Panc1 (cell line): ENCODE measurements at regions of chr16 and their contacts with region 1.

Region 1: DNA sequence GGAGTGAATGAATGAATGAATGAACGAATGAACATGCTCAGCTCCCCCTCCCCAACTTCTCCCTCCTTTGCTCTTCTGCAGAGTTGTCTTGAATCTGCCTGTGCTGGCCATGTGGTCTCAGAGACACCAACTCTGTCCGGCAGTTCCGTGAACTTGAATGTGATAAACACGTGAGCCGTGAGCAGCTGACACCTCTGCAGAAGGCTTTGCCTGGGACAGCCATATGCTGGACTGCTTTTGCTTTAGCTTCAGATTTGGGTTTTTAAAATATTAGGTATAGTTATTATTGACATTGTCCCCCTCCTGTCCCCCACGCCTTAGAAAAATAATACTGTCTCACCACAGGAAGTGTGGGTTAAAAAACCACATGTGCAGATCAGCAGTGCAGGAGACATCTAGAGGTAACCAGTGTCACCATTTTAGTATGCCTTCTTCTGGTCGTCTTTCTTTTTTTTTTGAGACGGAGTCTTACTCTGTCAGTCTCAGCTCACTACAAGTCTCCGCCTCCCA is 83.8 kb downstream of the ABCC1 start:
- DNase-seq: no peak
- ATAC-seq: no peak
- H3K4me3 ChIP-seq: no peak overlapping the region
- H3K27ac ChIP-seq: no peak overlapping the region; the same call in 1 of the 2 replicates
- H3K4me1 ChIP-seq: peaks cover 6% of the 10 kb centered on the region
- H3K27me3 ChIP-seq: no peaks in the 10 kb centered on the region
- CTCF ChIP-seq: no peak

Region 2: GRCh38 chr16:15658149-15658548 is 375.1 kb before region 1 on chr16:
- CTCF ChIA-PET with region 1: no interaction called
- POLR2A ChIA-PET with region 1: no interaction called
- in situ Hi-C with region 1: no loop called
- intact Hi-C with region 1: no loop called
- DNase-seq: no peak
- ATAC-seq: 0 out of 2 replicates have a peak, but pooled peaks have one; percentile 37
- H3K4me3 ChIP-seq: no peak overlapping the region
- H3K27ac ChIP-seq: no peak overlapping the region
- H3K4me1 ChIP-seq: peaks cover under 1% of the 10 kb centered on the region; the same call in 1 of the 2 replicates
- H3K27me3 ChIP-seq: no peaks in the 10 kb centered on the region
- CTCF ChIP-seq: no peak

Region 3: DNA sequence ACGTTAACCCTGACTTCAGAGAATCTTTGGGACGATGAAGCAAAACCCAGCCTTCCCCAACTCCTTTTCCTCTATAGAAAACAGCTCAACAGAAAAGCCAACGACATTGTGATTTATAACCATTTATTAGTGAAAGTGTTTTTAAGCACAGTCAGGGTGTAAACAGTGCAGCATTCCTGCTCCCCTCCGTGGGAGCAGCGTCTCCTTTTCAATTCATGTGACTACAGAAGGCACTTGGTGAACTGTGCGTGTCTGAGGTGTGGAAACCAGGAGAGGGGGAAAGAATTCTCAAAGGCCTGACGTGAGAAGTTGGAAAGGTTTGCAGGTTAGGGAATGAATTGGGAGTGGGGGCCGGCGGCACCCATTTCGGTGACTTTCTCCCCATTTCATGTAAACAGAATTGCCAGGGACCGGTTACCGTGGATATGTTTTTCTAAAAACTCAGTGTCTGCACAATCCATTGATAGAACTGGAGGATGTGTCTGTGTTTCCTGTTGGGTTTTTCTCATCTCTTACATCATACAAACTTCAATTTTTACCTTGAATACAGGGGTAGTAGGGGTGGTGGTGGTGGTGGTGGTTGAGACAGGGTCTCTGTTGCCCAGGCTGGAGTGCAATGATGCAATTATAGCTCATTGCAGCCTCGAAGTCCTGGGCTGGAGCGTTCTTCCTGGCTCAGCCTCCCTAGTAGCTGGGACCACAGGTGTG is 330.1 kb before region 1 on chr16:
- CTCF ChIA-PET with region 1: interaction called, 11 read pairs
- POLR2A ChIA-PET with region 1: no interaction called
- in situ Hi-C with region 1: no loop called
- intact Hi-C with region 1: no loop called
- DNase-seq: no peak
- ATAC-seq: no peak
- H3K4me3 ChIP-seq: no peak overlapping the region
- H3K27ac ChIP-seq: no peak overlapping the region
- H3K4me1 ChIP-seq: no peaks in the 10 kb centered on the region
- H3K27me3 ChIP-seq: no peaks in the 10 kb centered on the region
- CTCF ChIP-seq: no peak

Region 4: DNA sequence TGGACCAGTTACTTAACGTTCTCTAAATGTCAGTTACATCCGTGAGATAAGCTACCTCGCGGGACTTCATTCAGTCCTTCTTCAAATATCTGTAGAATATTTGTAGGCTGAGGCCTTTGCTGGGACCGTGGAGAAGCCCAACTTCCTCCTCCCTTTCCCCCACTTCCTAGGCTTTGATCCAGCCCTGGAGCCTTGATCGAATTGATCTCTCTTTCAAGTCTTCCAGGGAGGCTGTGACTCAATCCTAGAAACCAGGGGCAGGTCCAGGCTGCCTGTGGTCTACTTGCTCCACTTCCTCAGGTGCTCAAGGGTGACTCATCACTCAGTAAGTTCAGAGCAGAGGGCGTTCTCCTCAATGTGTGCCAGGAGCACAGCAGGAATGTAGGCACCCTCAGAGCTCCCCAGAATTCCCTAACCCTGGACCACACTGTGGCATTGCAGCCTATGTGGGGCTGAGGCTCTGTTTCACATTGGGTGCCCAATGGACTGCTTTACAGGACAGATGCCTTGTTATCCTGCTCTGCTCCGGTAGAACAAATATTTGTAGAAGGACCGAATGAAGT is 133.6 kb before region 1 on chr16:
- CTCF ChIA-PET with region 1: no interaction called
- POLR2A ChIA-PET with region 1: no interaction called
- in situ Hi-C with region 1: loop called (anchors 10 kb)
- intact Hi-C with region 1: no loop called
- DNase-seq: peak; percentile 92
- ATAC-seq: peak; percentile 98
- H3K4me3 ChIP-seq: peak overlapping the region in 1 of 2 experiments; percentile 40; a peak in 2 of 4 replicates
- H3K27ac ChIP-seq: peak overlapping the region; percentile 80
- H3K4me1 ChIP-seq: peaks cover 29% of the 10 kb centered on the region
- H3K27me3 ChIP-seq: no peaks in the 10 kb centered on the region
- CTCF ChIP-seq: no peak